ENCODE measurements at regions of chr17 and their contacts with region 1.

Region 1: DNA sequence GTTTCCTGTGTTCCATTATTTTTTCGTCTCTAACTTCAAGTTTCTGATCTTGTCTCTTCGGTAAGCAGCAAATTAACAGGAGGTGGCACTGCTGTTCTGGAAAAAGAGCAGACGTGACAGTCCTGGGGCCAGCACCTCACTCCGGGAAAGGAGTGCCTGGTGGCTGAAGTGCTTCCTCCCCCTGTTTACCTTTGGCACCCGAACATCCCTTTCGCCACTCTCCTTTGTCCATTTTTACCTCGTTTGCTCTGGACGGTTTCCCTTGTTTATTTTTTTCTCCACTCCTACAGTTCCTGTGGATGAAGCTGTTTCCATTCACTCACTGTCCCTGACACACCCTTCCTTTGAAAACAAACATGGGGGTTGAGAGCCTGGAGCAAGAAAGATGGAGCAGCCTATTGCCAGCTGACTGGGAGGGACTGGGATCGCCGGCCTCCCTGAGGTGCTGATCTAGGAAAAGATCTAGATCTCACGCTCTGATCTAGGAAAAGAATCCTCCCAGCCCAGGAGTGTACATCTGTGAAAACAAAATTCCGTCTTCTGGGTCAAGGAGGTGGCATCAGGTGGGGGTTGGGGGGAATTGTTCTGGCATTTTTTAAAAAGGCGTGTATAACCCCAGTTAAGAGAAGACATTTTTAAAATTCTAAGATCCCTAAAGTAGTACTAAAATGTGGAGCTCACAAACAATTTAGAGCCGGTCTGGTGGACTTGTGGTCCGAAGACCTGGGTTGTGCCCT is 12.7 kb downstream of the SAP30BP start:
- DNase-seq: no peak
- H3K4me3 ChIP-seq: no peak overlapping the region
- H3K27ac ChIP-seq: no peak overlapping the region
- H3K4me1 ChIP-seq: no peaks in the 10 kb centered on the region
- H3K27me3 ChIP-seq: no peaks in the 10 kb centered on the region
- CTCF ChIP-seq: no peak

Region 2: DNA sequence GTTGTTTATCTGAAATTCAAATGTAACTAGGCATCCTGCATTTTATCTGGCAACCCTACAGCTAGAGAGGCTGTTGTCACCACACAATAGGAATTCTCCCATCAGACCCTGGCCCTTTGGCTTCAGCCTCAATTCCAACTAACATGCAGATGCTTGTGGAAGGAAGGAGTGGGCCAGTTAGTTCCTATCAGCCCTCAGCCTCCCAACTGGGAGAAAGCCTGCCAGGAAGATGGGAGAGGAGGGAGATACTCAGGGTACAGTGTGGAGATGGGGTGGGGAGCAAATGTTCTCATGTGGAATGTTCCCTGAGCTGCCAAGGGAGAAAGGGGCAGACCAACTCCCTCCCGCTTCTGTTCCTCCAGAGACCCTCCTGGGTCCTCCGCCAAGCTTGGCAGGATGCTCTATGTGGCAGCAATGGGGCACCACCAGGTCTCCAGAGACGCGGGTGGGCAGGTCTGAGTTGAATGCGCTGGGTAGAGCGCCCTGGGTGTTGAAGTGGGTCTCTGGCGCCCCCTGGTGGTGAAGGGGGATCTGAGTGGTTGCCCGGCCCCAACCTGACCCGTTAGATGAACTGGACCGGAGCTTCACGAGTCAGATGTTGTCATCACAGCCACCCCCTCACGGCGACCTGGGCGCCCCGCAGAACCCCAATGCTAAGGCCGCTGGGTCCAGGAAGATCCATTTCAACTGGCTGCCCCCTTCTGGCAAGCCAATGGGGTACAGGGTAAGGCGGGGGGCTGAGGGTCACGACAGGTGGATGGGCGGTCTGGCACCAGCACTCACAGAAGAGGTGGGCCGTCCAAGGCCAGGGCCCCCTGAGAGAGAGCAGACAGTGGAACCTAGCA is 69.9 kb after region 1 on chr17:
- CTCF ChIA-PET with region 1: interaction called, 11 read pairs
- POLR2A ChIA-PET with region 1: no interaction called
- intact Hi-C with region 1: loop called (anchors 2 kb)
- DNase-seq: peak; percentile 84
- H3K4me3 ChIP-seq: no peak overlapping the region
- H3K27ac ChIP-seq: no peak overlapping the region
- H3K4me1 ChIP-seq: peaks cover 5% of the 10 kb centered on the region
- H3K27me3 ChIP-seq: no peaks in the 10 kb centered on the region
- CTCF ChIP-seq: peak; percentile 95

Region 3: DNA sequence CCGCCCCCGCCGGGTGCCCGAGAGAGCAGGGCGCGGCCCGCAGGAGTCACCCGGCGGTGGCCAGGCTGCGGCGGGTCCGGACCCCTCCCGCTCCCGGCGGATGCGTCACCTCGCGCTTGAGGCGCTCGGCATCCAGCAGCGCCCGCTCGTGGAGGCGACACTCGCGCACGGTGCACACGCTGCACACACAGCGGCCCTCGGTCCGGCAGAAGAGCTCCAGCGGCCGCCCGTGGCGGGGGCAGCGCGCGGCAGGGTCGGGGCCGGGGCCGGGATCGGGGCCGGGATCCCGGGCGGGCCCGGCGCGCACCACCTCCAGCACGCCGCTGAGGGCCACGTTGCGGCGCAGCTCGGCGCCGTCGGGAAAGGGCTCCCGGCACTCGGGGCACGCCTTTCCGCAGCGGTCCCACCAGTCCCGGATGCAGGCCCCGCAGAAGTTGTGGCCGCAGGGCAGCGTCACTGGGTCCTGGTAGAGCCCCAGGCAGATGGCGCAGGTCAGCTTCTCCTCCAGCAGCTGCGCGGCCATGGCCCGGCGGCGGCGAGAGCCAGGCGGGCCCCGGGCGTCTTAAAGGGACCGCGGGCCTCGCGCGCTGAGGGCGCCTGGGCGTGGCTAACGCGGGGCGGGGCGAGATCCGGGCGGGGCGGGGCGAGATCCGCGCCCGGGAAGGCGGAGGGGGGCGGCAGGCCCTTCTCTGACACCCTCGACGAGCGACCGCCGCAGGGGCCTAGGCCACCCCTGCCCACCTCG is 216.7 kb after region 1 on chr17 and contains the start of gene TRIM65:
- CTCF ChIA-PET with region 1: no interaction called
- POLR2A ChIA-PET with region 1: no interaction called
- intact Hi-C with region 1: no loop called
- DNase-seq: peak; percentile 82
- H3K4me3 ChIP-seq: peak within 1 kb of the TSS; percentile 89
- H3K27ac ChIP-seq: peak within 1 kb of the TSS; percentile 84
- H3K4me1 ChIP-seq: peaks cover 17% of the 10 kb centered on the region
- H3K27me3 ChIP-seq: no peaks in the 10 kb centered on the region
- CTCF ChIP-seq: 0 out of 2 replicates have a peak, but pooled peaks have one; percentile 26
- total RNA-seq, gene TRIM65: 46.1 and 47.9 TPM in 2 replicates